ENCODE measurements at regions of chr3 and their contacts with region 1.

Region 1: GRCh38 chr3:15399970-15400369 is 27.4 kb downstream of the METTL6 start:
- DNase-seq: no peak
- ATAC-seq: no peak
- H3K4me3 Mint-ChIP-seq: no peak overlapping the region
- H3K27ac Mint-ChIP-seq: no peak overlapping the region
- H3K4me1 Mint-ChIP-seq: peaks cover 40% of the 10 kb centered on the region
- H3K27me3 Mint-ChIP-seq: no peaks in the 10 kb centered on the region
- CTCF ChIP-seq: no peak

Region 2: GRCh38 chr3:15361494-15362212 is 38.3 kb before region 1 on chr3:
- CTCF ChIA-PET with region 1: interaction called, 15 read pairs
- POLR2A ChIA-PET with region 1: interaction called, 3 read pairs
- intact Hi-C with region 1: loop called (anchors 1 kb)
- DNase-seq: peak; percentile 44
- ATAC-seq: peak; percentile 70
- H3K4me3 Mint-ChIP-seq: peak overlapping the region; percentile 64
- H3K27ac Mint-ChIP-seq: peak overlapping the region; percentile 74
- H3K4me1 Mint-ChIP-seq: peaks cover 65% of the 10 kb centered on the region
- H3K27me3 Mint-ChIP-seq: no peaks in the 10 kb centered on the region
- CTCF ChIP-seq: no peak

Region 3: GRCh38 chr3:15377961-15378791 is 21.8 kb before region 1 on chr3:
- CTCF ChIA-PET with region 1: interaction called, 25 read pairs
- POLR2A ChIA-PET with region 1: interaction called, 4 read pairs
- intact Hi-C with region 1: loop called (anchors 1 kb)
- DNase-seq: peak; percentile 88
- ATAC-seq: peak; percentile 94
- H3K4me3 Mint-ChIP-seq: peak overlapping the region; percentile 44
- H3K27ac Mint-ChIP-seq: peak overlapping the region; percentile 91
- H3K4me1 Mint-ChIP-seq: peaks cover 29% of the 10 kb centered on the region
- H3K27me3 Mint-ChIP-seq: no peaks in the 10 kb centered on the region
- CTCF ChIP-seq: no peak

Region 4: DNA sequence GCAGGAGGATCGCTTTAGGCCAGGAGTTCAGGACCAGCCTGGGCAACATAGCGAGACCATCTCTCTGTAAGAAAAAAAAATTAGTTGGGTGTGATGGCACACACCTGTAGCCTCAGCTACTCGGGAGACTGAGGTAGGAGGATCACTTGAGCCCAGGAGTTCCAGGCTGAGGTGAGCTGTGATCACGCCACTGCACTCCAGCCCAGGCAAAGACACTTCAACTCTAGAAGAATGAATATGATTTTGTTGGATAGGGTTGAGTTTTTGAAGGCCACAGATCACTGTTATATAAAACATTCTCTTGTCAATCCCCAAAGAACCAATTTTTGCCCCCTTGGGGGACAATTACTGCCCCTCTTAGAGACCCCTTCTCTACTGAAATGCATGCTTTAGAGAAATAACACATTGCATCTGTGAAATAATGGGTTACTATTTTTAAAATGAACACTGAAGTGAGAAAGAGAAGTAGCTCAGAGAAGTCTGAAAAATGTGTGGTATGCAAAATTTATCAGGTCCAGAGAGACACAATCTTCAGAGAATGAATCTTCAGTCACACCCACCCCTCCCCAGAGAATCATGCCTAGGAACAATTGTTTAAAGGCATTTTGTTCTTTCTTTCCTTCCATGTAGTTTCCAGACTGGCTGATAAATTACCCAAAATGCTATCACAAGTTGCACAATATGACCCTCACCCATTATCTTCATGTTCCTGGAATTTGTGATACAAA is 15.3 kb before region 1 on chr3:
- CTCF ChIA-PET with region 1: interaction called, 25 read pairs
- POLR2A ChIA-PET with region 1: interaction called, 5 read pairs
- intact Hi-C with region 1: loop called (anchors 1 kb)
- DNase-seq: no peak
- ATAC-seq: peak; percentile 90
- H3K4me3 Mint-ChIP-seq: peak overlapping the region; percentile 71
- H3K27ac Mint-ChIP-seq: peak overlapping the region; percentile 95
- H3K4me1 Mint-ChIP-seq: peaks cover 79% of the 10 kb centered on the region
- H3K27me3 Mint-ChIP-seq: no peaks in the 10 kb centered on the region
- CTCF ChIP-seq: no peak

Measured in activated B cell treated with CpG ODN at 0.5 μM for 24 hours (primary cell).